Cardiac septum (tissue), 1 donor: ENCODE measurements at regions of chr5 and their contacts with region 1.

Region 1: DNA sequence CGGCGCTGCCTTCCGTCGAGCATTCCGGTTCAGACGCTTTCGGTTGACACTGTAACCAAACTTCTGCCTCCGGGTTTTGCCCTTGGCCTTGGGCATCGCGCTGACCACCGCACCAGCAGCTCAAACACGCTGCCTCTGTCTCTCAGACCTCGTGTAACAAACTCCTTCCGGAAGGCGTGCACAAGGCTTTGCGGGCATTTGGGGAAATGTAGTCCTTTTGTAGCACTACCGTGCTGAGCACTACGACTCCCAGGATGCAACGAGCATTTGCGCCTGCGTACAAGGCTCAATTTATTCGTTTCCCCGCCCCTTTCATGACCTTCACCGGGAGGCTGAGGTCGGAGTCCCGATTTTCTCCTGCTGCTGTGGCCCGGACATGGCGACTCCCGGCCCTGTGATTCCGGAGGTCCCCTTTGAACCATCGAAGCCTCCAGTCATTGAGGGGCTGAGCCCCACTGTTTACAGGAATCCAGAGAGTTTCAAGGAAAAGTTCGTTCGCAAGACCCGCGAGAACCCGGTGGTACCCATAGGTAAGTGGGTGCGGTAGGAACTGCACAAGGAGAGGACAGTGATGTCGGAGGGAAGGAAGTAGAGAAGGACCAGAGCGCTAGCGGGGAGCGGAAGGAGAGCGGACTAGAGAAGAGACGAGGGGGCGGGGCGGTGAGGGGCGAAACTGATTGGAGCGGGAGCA is at the starts of genes HIGD2A and NOP16:
- DNase-seq: peak; percentile 98
- total RNA-seq, gene HIGD2A: 266 TPM
- total RNA-seq, gene NOP16: 22.5 TPM

Region 2: GRCh38 chr5:176361437-176362232 is 27.0 kb before region 1 on chr5 and contains the start of gene KIAA1191:
- intact Hi-C with region 1: loop called (anchors 2 kb)
- DNase-seq: peak; percentile 98
- total RNA-seq, gene KIAA1191: 104 TPM